ENCODE measurements at regions of chr5 and their contacts with region 1.

Region 1: DNA sequence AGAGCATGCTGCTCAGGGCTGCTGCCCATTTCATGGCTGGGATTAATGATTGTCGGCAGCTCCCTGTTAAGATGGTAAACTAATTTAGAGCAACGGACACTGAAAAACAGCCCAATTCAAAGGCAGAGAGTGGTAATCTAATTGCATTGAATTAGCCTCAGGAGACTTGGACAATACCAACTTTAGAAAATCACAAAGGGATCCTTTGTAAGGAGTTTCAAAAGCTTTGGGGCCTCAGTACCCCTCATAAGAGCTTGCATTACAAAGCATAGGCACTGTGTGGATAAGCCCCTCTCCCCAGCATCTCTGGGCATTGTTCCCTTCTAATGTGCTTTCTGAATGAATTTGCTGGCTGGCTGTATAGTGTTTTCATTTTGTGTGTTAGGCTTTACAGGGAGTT is 6.7 kb downstream of the GLRA1 start:
- DNase-seq: no peak
- H3K4me3 ChIP-seq: no peak overlapping the region
- H3K27ac ChIP-seq: no peak overlapping the region
- H3K4me1 ChIP-seq: no peaks in the 10 kb centered on the region
- H3K27me3 ChIP-seq: no peaks in the 10 kb centered on the region
- CTCF ChIP-seq: no peak

Region 2: DNA sequence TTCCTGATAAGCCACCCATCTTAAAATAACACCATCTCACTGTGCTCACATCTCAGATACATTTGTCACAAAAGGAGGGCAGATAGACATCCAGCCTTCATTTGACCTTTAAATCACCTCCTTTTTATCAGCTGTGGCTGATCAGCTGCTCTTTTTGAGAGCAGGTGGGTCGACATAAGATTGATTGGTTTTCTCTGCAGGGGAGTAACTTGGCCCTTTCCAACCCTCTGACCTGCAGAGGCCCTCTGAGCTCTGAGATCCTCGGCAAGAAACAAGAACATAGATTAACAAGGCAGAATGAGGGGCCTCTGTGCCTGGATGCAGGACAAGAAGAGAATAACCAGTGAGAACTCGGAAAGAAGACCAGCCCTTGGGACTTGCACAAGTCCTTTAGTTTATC is 40.2 kb after region 1 on chr5:
- CTCF ChIA-PET with region 1: no interaction called
- dilution Hi-C with region 1: loop called (anchors 5 kb)
- in situ Hi-C with region 1: no loop called
- intact Hi-C with region 1: no loop called
- DNase-seq: no peak
- H3K4me3 ChIP-seq: no peak overlapping the region
- H3K27ac ChIP-seq: no peak overlapping the region
- H3K4me1 ChIP-seq: no peaks in the 10 kb centered on the region
- H3K27me3 ChIP-seq: no peaks in the 10 kb centered on the region
- CTCF ChIP-seq: no peak